IMR-90 (cell line): ENCODE measurements at regions of chrX and their contacts with region 1.

Region 1: GRCh38 chrX:56963377-56963776 is 32.0 kb downstream of the SPIN3 start:
- DNase-seq: no peak
- ATAC-seq: no peak
- H3K4me3 ChIP-seq: no peak overlapping the region
- H3K27ac ChIP-seq: no peak overlapping the region
- H3K4me1 ChIP-seq: no peaks in the 10 kb centered on the region
- H3K27me3 ChIP-seq: no peaks in the 10 kb centered on the region
- CTCF ChIP-seq: no peak
- POLR2A ChIP-seq: no peak
- RAD21 ChIP-seq: no peak

Region 2: GRCh38 chrX:56308726-56309125 is 654.7 kb before region 1 on chrX:
- CTCF ChIA-PET with region 1: no interaction called
- POLR2A ChIA-PET with region 1: no interaction called
- dilution Hi-C with region 1: no loop called
- in situ Hi-C with region 1: no loop called
- intact Hi-C with region 1: no loop called
- DNase-seq: no peak
- ATAC-seq: no peak
- H3K4me3 ChIP-seq: no peak overlapping the region
- H3K27ac ChIP-seq: no peak overlapping the region
- H3K4me1 ChIP-seq: no peaks in the 10 kb centered on the region
- H3K27me3 ChIP-seq: no peaks in the 10 kb centered on the region
- CTCF ChIP-seq: no peak
- POLR2A ChIP-seq: no peak
- RAD21 ChIP-seq: no peak

Region 3: DNA sequence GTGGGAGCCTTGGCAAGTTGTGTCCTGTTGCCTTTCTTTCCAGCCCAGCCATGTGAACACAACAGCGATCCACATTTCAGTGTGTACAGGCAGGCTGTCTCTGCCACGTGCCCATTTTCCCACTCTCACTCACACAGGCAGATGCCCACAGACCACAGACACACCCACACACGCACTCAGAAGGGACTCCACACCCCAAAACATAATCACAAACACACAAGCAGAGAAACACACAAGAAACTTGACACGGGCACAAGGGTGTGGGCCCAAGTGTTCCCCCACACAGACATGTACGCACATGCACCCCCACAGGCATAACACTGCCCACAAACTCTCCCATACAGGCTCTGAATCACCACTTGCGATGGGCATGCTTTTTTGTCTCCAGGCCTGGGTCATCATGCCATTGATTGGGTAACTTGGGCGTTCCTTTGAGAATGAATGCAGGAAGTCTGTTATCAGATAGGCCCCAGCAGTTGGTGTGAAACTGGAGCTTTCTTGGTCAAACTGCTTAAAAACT is 150.0 kb before region 1 on chrX:
- CTCF ChIA-PET with region 1: no interaction called
- POLR2A ChIA-PET with region 1: no interaction called
- dilution Hi-C with region 1: no loop called
- in situ Hi-C with region 1: no loop called
- intact Hi-C with region 1: loop called (anchors 5 kb)
- DNase-seq: peak; percentile 31
- ATAC-seq: peak; percentile 44
- H3K4me3 ChIP-seq: no peak overlapping the region
- H3K27ac ChIP-seq: no peak overlapping the region
- H3K4me1 ChIP-seq: peaks cover 4% of the 10 kb centered on the region; the same call in 1 of the 2 replicates
- H3K27me3 ChIP-seq: no peaks in the 10 kb centered on the region; the same call in 1 of the 2 replicates
- CTCF ChIP-seq: no peak
- POLR2A ChIP-seq: no peak
- RAD21 ChIP-seq: no peak

Region 4: GRCh38 chrX:56876286-56876685 is 87.1 kb before region 1 on chrX:
- CTCF ChIA-PET with region 1: no interaction called
- POLR2A ChIA-PET with region 1: interaction called, 12 read pairs
- dilution Hi-C with region 1: no loop called
- in situ Hi-C with region 1: no loop called
- intact Hi-C with region 1: no loop called
- DNase-seq: no peak
- ATAC-seq: no peak
- H3K4me3 ChIP-seq: no peak overlapping the region
- H3K27ac ChIP-seq: no peak overlapping the region
- H3K4me1 ChIP-seq: no peaks in the 10 kb centered on the region
- H3K27me3 ChIP-seq: no peaks in the 10 kb centered on the region
- CTCF ChIP-seq: no peak
- POLR2A ChIP-seq: no peak
- RAD21 ChIP-seq: no peak